ENCODE measurements at regions of chr5 and their contacts with region 1.

Region 1: GRCh38 chr5:88785391-88786219 is 97.4 kb downstream of the MEF2C start:
- DNase-seq: peak; percentile 12
- H3K4me3 Mint-ChIP-seq: no peak overlapping the region
- H3K27ac Mint-ChIP-seq: no peak overlapping the region
- H3K4me1 Mint-ChIP-seq: peaks cover 15% of the 10 kb centered on the region
- H3K27me3 Mint-ChIP-seq: peaks cover 10% of the 10 kb centered on the region

Region 2: DNA sequence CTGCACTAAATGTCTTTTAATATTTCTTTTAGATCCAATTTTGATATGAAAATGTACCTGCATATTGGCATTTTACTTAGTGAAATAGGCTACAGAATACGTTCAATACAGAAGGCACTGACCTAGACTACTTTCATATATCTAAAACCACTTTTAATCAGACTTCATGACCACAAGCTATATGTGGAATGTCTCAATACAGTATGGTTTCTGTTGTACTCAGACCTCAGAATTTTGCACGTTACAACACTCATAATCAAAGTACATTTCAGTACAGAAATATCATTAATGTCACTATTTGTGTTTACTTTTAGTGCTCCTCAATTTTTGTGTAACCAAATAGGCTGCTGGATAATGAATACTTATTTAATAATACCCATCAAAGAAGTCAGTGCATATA is 22.5 kb after region 1 on chr5:
- CTCF ChIA-PET with region 1: no interaction called
- POLR2A ChIA-PET with region 1: no interaction called
- intact Hi-C with region 1: loop called (anchors 2 kb)
- DNase-seq: no peak
- H3K4me3 Mint-ChIP-seq: no peak overlapping the region
- H3K27ac Mint-ChIP-seq: no peak overlapping the region
- H3K4me1 Mint-ChIP-seq: no peaks in the 10 kb centered on the region
- H3K27me3 Mint-ChIP-seq: peaks cover 8% of the 10 kb centered on the region

Region 3: GRCh38 chr5:88833371-88834130 is 47.9 kb after region 1 on chr5:
- CTCF ChIA-PET with region 1: no interaction called
- POLR2A ChIA-PET with region 1: no interaction called
- intact Hi-C with region 1: loop called (anchors 2 kb)
- DNase-seq: peak; percentile 74
- H3K4me3 Mint-ChIP-seq: no peak overlapping the region
- H3K27ac Mint-ChIP-seq: no peak overlapping the region
- H3K4me1 Mint-ChIP-seq: peaks cover 15% of the 10 kb centered on the region
- H3K27me3 Mint-ChIP-seq: peaks cover 9% of the 10 kb centered on the region

Region 4: DNA sequence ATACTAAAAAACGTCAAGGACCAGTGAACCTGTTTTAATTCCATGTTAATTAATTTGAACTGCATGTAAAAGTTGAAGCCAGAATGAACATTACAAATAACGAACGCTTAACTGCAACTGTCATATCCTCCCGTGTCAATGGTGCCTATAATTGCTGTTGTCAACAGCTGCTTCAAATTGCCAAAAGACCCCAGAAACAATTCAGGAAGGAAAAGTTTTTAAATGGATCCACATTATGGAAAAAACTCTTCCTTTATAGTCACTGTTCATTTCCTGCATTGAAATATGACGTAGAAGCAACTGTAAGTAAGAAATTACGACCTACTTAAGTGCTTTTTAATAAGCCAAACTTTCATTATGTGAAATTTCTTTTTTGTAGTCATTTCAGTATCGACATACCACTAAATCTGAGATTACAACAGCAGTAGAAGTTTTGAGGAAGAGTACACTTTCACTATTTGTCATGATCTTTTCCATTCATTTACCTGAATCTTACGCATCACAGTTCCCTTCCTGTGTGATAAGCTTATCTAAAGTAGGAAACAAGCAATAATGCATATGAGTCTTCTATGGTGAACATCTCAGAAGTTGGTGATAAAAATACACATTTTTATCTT is 59.6 kb after region 1 on chr5:
- CTCF ChIA-PET with region 1: no interaction called
- POLR2A ChIA-PET with region 1: no interaction called
- intact Hi-C with region 1: loop called (anchors 1 kb)
- DNase-seq: no peak
- H3K4me3 Mint-ChIP-seq: no peak overlapping the region
- H3K27ac Mint-ChIP-seq: no peak overlapping the region
- H3K4me1 Mint-ChIP-seq: peaks cover 6% of the 10 kb centered on the region
- H3K27me3 Mint-ChIP-seq: peaks cover 10% of the 10 kb centered on the region